ENCODE measurements at regions of chr6 and their contacts with region 1.

Region 1: DNA sequence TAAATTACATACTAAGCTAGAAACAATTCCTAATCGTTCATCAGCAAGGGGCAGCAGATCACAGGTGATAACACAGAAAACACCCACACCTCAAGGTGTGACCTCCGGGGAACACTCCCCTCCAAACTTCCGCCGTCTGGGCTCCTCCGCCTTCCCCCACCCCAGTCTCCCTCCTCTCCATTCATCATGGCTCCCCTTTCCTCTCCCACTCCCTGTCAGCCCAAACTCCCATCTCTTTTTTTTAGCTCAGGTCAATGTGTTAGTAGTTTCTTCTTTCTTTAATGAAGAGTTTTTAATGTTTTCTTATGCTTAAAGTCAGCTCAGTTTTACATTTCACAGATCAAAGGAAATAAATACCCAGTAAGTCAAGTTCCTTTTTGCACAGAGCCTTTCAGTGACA is 20.7 kb downstream of the CNKSR3 start:
- DNase-seq: no peak
- H3K4me3 ChIP-seq: no peak overlapping the region
- H3K27ac ChIP-seq: no peak overlapping the region
- H3K4me1 ChIP-seq: peaks cover 0 to 7% (median 1%) of the 10 kb centered on the region in 4 experiments
- H3K27me3 ChIP-seq: no peaks in the 10 kb centered on the region

Region 2: GRCh38 chr6:154500769-154501577 is 11.2 kb after region 1 on chr6:
- CTCF ChIA-PET with region 1: interaction called, 10 read pairs
- POLR2A ChIA-PET with region 1: no interaction called
- DNase-seq: peak in 1 of 3 donors; percentile 28
- H3K4me3 ChIP-seq: no peak overlapping the region
- H3K27ac ChIP-seq: no peak overlapping the region
- H3K4me1 ChIP-seq: peaks cover 3 to 15% (median 7%) of the 10 kb centered on the region in 4 experiments
- H3K27me3 ChIP-seq: no peaks in the 10 kb centered on the region